GM10248 (cell line): ENCODE measurements at regions of chr9 and their contacts with region 1.

Region 1: GRCh38 chr9:34346873-34347799 is 17.8 kb downstream of the NUDT2 start:
- DNase-seq: no peak
- CTCF ChIP-seq: no peak

Region 2: GRCh38 chr9:34203992-34204635 is 143.0 kb before region 1 on chr9:
- CTCF ChIA-PET with region 1: no interaction called
- POLR2A ChIA-PET with region 1: no interaction called
- DNase-seq: no peak
- CTCF ChIP-seq: no peak

Region 3: GRCh38 chr9:34252670-34253459 is 94.3 kb before region 1 on chr9:
- CTCF ChIA-PET with region 1: no interaction called
- POLR2A ChIA-PET with region 1: no interaction called
- DNase-seq: peak; percentile 80
- CTCF ChIP-seq: peak; percentile 79

Region 4: GRCh38 chr9:34376596-34377403 is 29.7 kb after region 1 on chr9 and contains the start of gene MYORG:
- CTCF ChIA-PET with region 1: interaction called, 10 read pairs
- POLR2A ChIA-PET with region 1: interaction called, 3 read pairs
- DNase-seq: peak; percentile 99
- CTCF ChIP-seq: no peak